ENCODE measurements at regions of chr11 and their contacts with region 1.

Region 1: GRCh38 chr11:57345555-57346211 is 7.5 kb downstream of the P2RX3 start:
- DNase-seq: peak; percentile 46 to 70
- ATAC-seq: peak; percentile 84 to 92
- H3K4me3 ChIP-seq: no peak overlapping the region
- H3K27ac ChIP-seq: no peak overlapping the region
- H3K4me1 ChIP-seq: no peaks in the 10 kb centered on the region
- H3K27me3 ChIP-seq: no peaks in the 10 kb centered on the region
- CTCF ChIP-seq: peak; percentile 37 to 90 (median 68)
- POLR2A ChIP-seq: no peak

Region 2: DNA sequence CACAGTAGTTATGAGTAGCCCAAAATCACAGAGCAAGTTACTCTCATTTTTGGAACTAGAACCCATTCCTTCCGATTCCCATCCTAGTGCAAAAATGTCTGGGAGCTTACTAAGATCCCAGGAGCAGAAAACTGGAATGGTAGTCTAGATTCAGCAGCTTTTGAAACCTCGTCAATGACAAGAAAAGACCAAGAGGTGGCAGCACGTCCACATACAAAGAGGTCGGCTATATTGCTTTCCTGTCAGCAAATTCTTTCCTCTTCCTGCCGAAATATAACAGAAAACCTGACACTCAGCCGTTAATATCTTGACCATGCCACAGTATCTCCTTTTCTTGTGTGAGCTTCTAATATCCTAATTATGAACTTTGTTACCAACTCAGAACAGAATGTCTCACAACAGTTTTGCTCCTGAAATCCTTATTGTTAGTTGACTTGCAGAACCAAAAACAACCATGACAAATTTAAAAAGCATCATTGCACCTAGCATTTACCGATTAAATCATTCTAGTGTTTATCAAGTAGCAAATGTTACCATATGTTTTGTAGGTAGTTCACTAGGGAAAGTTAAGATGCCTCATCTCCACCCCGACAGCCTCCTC is 504.4 kb before region 1 on chr11:
- in situ Hi-C with region 1: loop called in 2 of 4 experiments (anchors 25 kb)
- intact Hi-C with region 1: loop called (anchors 10 kb)
- DNase-seq: peak in 1 of 2 donors; percentile 17
- ATAC-seq: peak in 1 of 2 donors; percentile 64
- H3K4me3 ChIP-seq: no peak overlapping the region
- H3K27ac ChIP-seq: no peak overlapping the region
- H3K4me1 ChIP-seq: peaks cover 0 to 7% of the 10 kb centered on the region in 2 donors
- H3K27me3 ChIP-seq: no peaks in the 10 kb centered on the region
- CTCF ChIP-seq: peak; percentile 53 to 59 (median 58)
- POLR2A ChIP-seq: no peak

Region 3: DNA sequence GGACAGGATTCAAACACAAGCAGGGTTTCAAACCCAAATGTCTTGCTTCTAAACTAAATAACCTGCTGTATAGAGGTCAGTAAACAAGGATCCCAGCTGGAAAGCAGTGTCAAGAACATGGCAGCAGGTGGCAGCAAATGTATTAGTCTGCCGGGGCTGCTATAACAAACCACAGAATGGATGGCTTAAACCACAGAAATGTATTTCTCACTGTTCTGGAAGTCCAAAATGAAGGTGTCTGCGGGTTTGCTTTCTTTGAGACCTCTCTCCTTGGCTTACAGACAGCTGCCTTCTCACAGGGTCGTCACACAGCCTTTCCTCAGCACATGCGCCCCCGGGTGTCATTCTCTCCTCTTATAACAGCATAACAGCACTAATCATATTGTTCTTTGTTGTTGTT is 229.0 kb before region 1 on chr11:
- in situ Hi-C with region 1: loop called in 1 of 4 experiments (anchors 25 kb)
- intact Hi-C with region 1: loop called (anchors 10 kb)
- DNase-seq: no peak
- ATAC-seq: peak; percentile 41 to 74
- H3K4me3 ChIP-seq: no peak overlapping the region
- H3K27ac ChIP-seq: no peak overlapping the region
- H3K4me1 ChIP-seq: peaks cover 0 to 1% of the 10 kb centered on the region in 2 donors
- H3K27me3 ChIP-seq: no peaks in the 10 kb centered on the region
- CTCF ChIP-seq: peak; percentile 41 to 55 (median 51)
- POLR2A ChIP-seq: no peak

Region 4: GRCh38 chr11:57480409-57481137 is 134.9 kb after region 1 on chr11:
- in situ Hi-C with region 1: loop called in 1 of 4 experiments (anchors 25 kb)
- intact Hi-C with region 1: loop called (anchors 5 kb)
- DNase-seq: peak in 1 of 2 donors; percentile 43
- ATAC-seq: peak in 1 of 2 donors; percentile 34
- H3K4me3 ChIP-seq: no peak overlapping the region
- H3K27ac ChIP-seq: no peak overlapping the region
- H3K4me1 ChIP-seq: peaks cover 14 to 20% of the 10 kb centered on the region in 2 donors
- H3K27me3 ChIP-seq: peaks cover 6 to 9% (median 6%) of the 10 kb centered on the region in 3 donors
- CTCF ChIP-seq: peak in 4 of 5 experiments; percentile 41 to 78 (median 64)
- POLR2A ChIP-seq: no peak

Region 5: DNA sequence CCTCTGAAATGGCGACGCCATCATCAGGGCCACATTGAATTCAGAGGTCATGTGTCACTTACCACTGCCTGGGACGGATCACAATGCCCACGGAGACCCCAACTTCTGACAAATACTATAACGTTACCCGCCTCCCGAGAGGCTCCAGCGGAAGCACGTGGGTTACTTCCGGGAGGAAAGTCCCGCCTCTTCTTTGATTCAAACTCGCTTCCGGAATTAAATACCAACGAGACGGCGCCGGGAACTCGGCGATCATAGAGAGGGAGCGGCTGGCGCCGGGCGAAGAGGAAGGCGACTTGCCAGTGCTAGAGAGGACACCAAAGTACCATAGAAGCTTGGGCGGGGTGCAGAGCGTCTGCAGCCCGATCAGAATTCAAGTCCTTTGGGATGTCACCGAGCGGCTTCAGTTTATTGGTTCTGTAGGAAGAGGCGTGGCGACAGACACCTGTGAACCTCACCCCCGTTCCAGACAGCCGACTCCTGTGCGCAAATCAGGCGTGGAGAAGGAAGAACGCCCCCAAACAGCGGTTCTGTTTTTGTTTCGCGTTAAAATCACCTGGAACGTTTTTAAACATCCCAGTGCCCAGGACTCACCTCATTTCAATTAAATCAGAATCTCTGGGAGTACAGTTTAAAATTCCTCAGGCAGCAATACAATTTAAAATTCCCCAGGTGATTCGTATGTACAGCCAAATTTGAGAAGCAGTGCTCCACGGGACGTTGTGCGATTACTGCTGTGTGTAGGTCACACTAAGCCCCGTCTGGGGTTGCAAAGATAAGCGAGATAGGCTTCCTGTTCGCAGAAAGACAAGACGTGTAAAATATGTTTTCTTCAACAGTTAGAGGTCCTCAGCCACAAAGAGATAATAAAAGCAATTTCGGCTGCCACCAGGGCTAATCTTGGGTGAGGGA is 185.2 kb after region 1 on chr11 and contains the start of gene TIMM10:
- in situ Hi-C with region 1: loop called in 1 of 4 experiments (anchors 10 kb)
- intact Hi-C with region 1: loop called (anchors 5 kb)
- DNase-seq: peak; percentile 96 to 98
- ATAC-seq: peak; percentile 95 to 97
- H3K4me3 ChIP-seq: peak within 1 kb of the TSS; percentile 84 to 94 (median 85)
- H3K27ac ChIP-seq: peak within 1 kb of the TSS; percentile 88 to 92 (median 90)
- H3K4me1 ChIP-seq: peaks cover 13 to 19% of the 10 kb centered on the region in 2 donors
- H3K27me3 ChIP-seq: no peaks in the 10 kb centered on the region
- CTCF ChIP-seq: no peak
- POLR2A ChIP-seq: peak; percentile 53 to 82
- total RNA-seq, gene TIMM10: 45.4 to 61.7 (median 49.5) TPM

Region 6: GRCh38 chr11:57644748-57645688 is 299.3 kb after region 1 on chr11:
- in situ Hi-C with region 1: loop called in 3 of 4 experiments (anchors 10 to 25 kb)
- intact Hi-C with region 1: loop called (anchors 5 kb)
- DNase-seq: peak; percentile 66 to 73
- ATAC-seq: peak; percentile 69 to 76
- H3K4me3 ChIP-seq: no peak overlapping the region
- H3K27ac ChIP-seq: peak overlapping the region; percentile 29 to 56 (median 44)
- H3K4me1 ChIP-seq: peaks cover 17 to 22% of the 10 kb centered on the region in 2 donors
- H3K27me3 ChIP-seq: peaks cover 39 to 45% (median 43%) of the 10 kb centered on the region in 3 donors
- CTCF ChIP-seq: peak; percentile 71 to 96 (median 78)
- POLR2A ChIP-seq: no peak